Activated CD8-positive, alpha-beta T cell treated with anti-CD3 and anti-CD28 coated beads, Interleukin-2, amount 10 ng/mL, durations not matched to agents 7 days and 5 days (primary cell): ENCODE measurements at regions of chr7 and their contacts with region 1.

Region 1: GRCh38 chr7:104267701-104268368 is 60.0 kb upstream of the ORC5 start:
- DNase-seq: no peak
- ATAC-seq: no peak
- H3K4me3 Mint-ChIP-seq: no peak overlapping the region
- H3K27ac Mint-ChIP-seq: no peak overlapping the region
- H3K4me1 Mint-ChIP-seq: no peaks in the 10 kb centered on the region
- H3K27me3 Mint-ChIP-seq: peaks cover 10% of the 10 kb centered on the region

Region 2: GRCh38 chr7:104231054-104232046 is 36.5 kb before region 1 on chr7:
- CTCF ChIA-PET with region 1: interaction called, 16 read pairs
- POLR2A ChIA-PET with region 1: no interaction called
- DNase-seq: peak; percentile 62
- ATAC-seq: peak; percentile 82
- H3K4me3 Mint-ChIP-seq: no peak overlapping the region
- H3K27ac Mint-ChIP-seq: no peak overlapping the region
- H3K4me1 Mint-ChIP-seq: no peaks in the 10 kb centered on the region
- H3K27me3 Mint-ChIP-seq: peaks cover 20% of the 10 kb centered on the region